Heart left ventricle (tissue), 16 donors: ENCODE measurements at regions of chr1 and their contacts with region 1.

Region 1: DNA sequence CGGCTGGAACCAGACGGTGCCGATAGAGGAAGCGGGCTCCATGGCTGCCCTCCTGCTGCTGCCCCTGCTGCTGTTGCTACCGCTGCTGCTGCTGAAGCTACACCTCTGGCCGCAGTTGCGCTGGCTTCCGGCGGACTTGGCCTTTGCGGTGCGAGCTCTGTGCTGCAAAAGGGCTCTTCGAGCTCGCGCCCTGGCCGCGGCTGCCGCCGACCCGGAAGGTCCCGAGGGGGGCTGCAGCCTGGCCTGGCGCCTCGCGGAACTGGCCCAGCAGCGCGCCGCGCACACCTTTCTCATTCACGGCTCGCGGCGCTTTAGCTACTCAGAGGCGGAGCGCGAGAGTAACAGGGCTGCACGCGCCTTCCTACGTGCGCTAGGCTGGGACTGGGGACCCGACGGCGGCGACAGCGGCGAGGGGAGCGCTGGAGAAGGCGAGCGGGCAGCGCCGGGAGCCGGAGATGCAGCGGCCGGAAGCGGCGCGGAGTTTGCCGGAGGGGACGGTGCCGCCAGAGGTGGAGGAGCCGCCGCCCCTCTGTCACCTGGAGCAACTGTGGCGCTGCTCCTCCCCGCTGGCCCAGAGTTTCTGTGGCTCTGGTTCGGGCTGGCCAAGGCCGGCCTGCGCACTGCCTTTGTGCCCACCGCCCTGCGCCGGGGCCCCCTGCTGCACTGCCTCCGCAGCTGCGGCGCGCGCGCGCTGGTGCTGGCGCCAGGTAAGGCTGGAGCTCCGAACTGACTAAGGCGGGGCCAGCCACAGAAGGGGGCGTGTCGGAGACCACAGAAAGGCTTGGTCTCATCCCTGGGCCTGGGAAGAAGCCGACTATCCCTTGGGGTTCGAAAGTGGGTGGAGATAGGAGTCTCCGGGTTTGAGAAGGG is 486 bp downstream of the SLC27A3 start:
- DNase-seq: peak; percentile 66 to 87 (median 71)
- ATAC-seq: peak in 3 of 4 donors; percentile 6 to 43 (median 37)
- H3K4me3 ChIP-seq: peak overlapping the region; percentile 57 to 91 (median 78)
- H3K27ac ChIP-seq: peak overlapping the region; percentile 74 to 95 (median 85)
- H3K4me1 ChIP-seq: peaks cover 7 to 91% (median 69%) of the 10 kb centered on the region in 12 donors
- H3K27me3 ChIP-seq: no peaks in the 10 kb centered on the region
- CTCF ChIP-seq: peak in 1 of 12 donors; percentile 2
- POLR2A ChIP-seq: no peak

Region 2: DNA sequence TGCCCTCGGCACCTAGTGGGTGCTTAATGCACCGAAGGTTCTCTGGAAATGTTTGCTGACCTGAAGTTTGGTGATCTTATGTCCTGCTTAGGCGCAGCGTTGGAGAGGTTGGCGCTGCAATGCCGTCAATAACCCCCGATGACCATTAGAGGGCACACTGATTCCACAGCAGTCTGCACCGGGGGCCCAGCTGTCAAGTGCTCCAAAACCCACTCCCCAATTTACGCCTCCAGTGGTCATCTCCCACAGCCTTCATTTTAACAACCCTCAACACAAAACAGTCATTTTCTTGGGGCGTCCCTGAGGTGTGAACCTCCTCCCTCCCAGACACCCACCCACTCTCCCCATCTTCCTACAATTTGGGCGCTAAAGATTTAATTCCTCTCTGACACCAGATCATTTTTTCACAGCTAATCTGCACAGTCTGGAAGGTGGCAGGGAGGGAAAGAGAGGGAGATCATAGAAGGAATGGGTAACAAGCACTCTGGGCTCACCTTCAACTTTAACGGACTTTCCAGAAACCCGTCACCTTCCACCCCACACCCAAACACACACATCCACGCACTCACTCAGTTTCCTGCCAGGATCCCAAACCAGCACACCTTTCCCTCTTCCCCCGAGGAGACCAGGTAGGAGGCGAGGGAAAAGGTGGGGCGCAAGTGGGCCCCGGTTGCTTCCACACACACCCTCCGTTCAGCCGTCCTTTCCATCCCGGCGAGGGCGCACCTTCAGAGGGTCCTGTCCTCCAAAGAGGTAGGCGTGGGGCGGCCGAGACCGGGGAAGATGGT is 97.8 kb before region 1 on chr1:
- intact Hi-C with region 1: loop called in 9 of 10 experiments (anchors 1 to 5 kb)
- DNase-seq: peak in 4 of 5 donors; percentile 50 to 71 (median 52)
- ATAC-seq: peak; percentile 44 to 78 (median 67)
- H3K4me3 ChIP-seq: peak overlapping the region; percentile 35 to 76 (median 60)
- H3K27ac ChIP-seq: peak overlapping the region in 11 of 12 donors; percentile 3 to 83 (median 68)
- H3K4me1 ChIP-seq: peaks cover 0 to 26% (median 19%) of the 10 kb centered on the region in 12 donors
- H3K27me3 ChIP-seq: peaks cover 0 to 28% (median 7%) of the 10 kb centered on the region in 9 donors
- CTCF ChIP-seq: peak; percentile 82 to 96 (median 93)
- POLR2A ChIP-seq: no peak

Region 3: GRCh38 chr1:153760440-153760839 is 15.3 kb before region 1 on chr1:
- intact Hi-C with region 1: loop called in 1 of 10 experiments (anchors 2 kb)
- DNase-seq: no peak
- ATAC-seq: no peak
- H3K4me3 ChIP-seq: no peak overlapping the region
- H3K27ac ChIP-seq: no peak overlapping the region
- H3K4me1 ChIP-seq: peaks cover 0 to 23% (median 12%) of the 10 kb centered on the region in 12 donors
- H3K27me3 ChIP-seq: no peaks in the 10 kb centered on the region
- CTCF ChIP-seq: no peak
- POLR2A ChIP-seq: no peak